ENCODE measurements at regions of chr22 and their contacts with region 1.

Region 1: GRCh38 chr22:21629262-21630149 is at the start of gene YDJC:
- DNase-seq: peak; percentile 95 to 96 (median 96)
- ATAC-seq: peak; percentile 93 to 98 (median 96)
- H3K4me3 ChIP-seq: peak within 1 kb of the TSS; percentile 80 to 95 (median 82)
- H3K27ac ChIP-seq: peak within 1 kb of the TSS in 2 of 3 donors; percentile 5 to 20
- H3K4me1 ChIP-seq: peaks cover 0 to 6% (median 2%) of the 10 kb centered on the region in 4 donors
- H3K27me3 ChIP-seq: no peaks in the 10 kb centered on the region
- CTCF ChIP-seq: peak; percentile 41 to 65 (median 58)
- POLR2A ChIP-seq: peak; percentile 67
- total RNA-seq, gene YDJC: 7.1 to 29.0 (median 7.8) TPM

Region 2: GRCh38 chr22:21582801-21583740 is 46.4 kb before region 1 on chr22:
- intact Hi-C with region 1: loop called (anchors 5 kb)
- DNase-seq: no peak
- ATAC-seq: peak in 1 of 4 donors; percentile 25
- H3K4me3 ChIP-seq: no peak overlapping the region
- H3K27ac ChIP-seq: no peak overlapping the region
- H3K4me1 ChIP-seq: peaks cover 0 to 37% (median 14%) of the 10 kb centered on the region in 4 donors
- H3K27me3 ChIP-seq: no peaks in the 10 kb centered on the region
- CTCF ChIP-seq: no peak
- POLR2A ChIP-seq: no peak

Measured in right lobe of liver (tissue), 6 donors.